B cell (primary cell): ENCODE measurements at regions of chr7 and their contacts with region 1.

Region 1: DNA sequence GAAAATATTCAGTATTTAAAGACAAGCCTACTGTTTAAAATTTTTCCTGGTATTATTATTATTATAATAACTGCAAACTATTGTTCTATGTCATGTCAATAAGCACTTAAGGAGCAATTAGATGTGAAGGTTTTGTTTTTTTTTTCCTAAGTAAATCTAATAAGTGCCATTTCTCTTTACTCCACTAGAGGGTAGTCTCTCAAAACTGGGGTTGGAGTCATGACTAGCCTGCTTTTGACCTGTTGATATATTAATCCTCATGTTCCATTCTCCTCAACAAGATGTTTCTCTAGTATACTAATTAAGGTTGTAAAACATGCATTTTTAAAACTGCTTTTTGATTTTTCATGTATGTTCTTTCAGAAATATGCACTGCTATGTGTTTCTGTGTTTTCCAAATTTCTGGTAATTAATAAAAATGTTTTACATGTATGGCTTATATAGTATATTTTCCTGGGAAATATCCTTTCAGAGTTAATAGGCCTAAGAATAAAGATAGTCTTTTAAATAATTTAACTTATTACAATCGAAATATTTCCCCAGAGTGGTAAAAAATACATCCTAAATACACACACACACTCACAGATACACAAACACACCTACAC is 1.0 kb upstream of the LRRN3 start:
- DNase-seq: peak; percentile 55
- ATAC-seq: peak; percentile 53
- H3K4me3 ChIP-seq: no peak overlapping the region
- H3K4me3 Mint-ChIP-seq: no peak overlapping the region
- H3K27ac ChIP-seq: no peak overlapping the region
- H3K27ac Mint-ChIP-seq: no peak overlapping the region
- H3K4me1 ChIP-seq: no peaks in the 10 kb centered on the region
- H3K4me1 Mint-ChIP-seq: peaks cover 6% of the 10 kb centered on the region
- H3K27me3 ChIP-seq: no peaks in the 10 kb centered on the region
- H3K27me3 Mint-ChIP-seq: no peaks in the 10 kb centered on the region
- CTCF ChIP-seq: peak; percentile 84

Region 2: DNA sequence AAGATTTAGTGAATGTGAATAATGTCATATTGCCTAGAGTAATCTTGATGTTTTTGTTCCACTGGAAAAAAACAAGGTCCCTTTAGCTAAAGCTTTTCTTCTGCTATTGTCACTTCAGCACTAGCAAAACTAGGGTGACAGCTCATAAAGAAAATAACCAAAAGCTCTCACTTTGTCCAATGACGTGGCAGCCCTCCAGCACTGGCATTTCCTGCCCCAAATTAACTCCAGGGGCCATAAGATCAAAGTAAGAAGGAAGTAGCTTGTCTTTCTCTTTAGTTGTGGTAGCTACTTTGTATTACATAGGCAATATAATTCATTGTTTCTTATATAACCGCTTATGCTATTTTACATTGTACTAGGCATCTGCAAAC is 48.3 kb after region 1 on chr7:
- CTCF ChIA-PET with region 1: interaction called, 4 read pairs
- POLR2A ChIA-PET with region 1: no interaction called
- intact Hi-C with region 1: loop called (anchors 5 kb)
- DNase-seq: peak; percentile 50
- ATAC-seq: peak; percentile 68
- H3K4me3 ChIP-seq: peak overlapping the region in 2 of 5 experiments; percentile 10 to 43
- H3K4me3 Mint-ChIP-seq: peak overlapping the region; percentile 65
- H3K27ac ChIP-seq: peak overlapping the region; percentile 34 to 73
- H3K27ac Mint-ChIP-seq: peak overlapping the region; percentile 87
- H3K4me1 ChIP-seq: peaks cover 12 to 15% of the 10 kb centered on the region in 2 donors
- H3K4me1 Mint-ChIP-seq: peaks cover 15% of the 10 kb centered on the region
- H3K27me3 ChIP-seq: no peaks in the 10 kb centered on the region
- H3K27me3 Mint-ChIP-seq: no peaks in the 10 kb centered on the region
- CTCF ChIP-seq: no peak